HepG2 (cell line): ENCODE measurements at regions of chr10 and their contacts with region 1.

Region 1: GRCh38 chr10:114684085-114684821 is 26.2 kb upstream of the ABLIM1 start:
- DNase-seq: peak; percentile 50
- ATAC-seq: peak; percentile 78
- H3K4me3 ChIP-seq: peak overlapping the region; percentile 28 to 67 (median 57)
- H3K27ac ChIP-seq: peak overlapping the region; percentile 69
- H3K4me1 ChIP-seq: peaks cover 42% of the 10 kb centered on the region
- H3K27me3 ChIP-seq: no peaks in the 10 kb centered on the region
- CTCF ChIP-seq: no peak
- EP300 ChIP-seq: no peak
- POLR2A ChIP-seq: no peak
- RAD21 ChIP-seq: no peak

Region 2: GRCh38 chr10:114631666-114632417 is 52.4 kb before region 1 on chr10:
- CTCF ChIA-PET with region 1: no interaction called
- POLR2A ChIA-PET with region 1: interaction called, 9 read pairs
- in situ Hi-C with region 1: loop called (anchors 5 kb)
- intact Hi-C with region 1: no loop called
- DNase-seq: peak; percentile 76
- ATAC-seq: peak; percentile 95
- H3K4me3 ChIP-seq: peak overlapping the region; percentile 62 to 71 (median 64)
- H3K27ac ChIP-seq: peak overlapping the region; percentile 10
- H3K4me1 ChIP-seq: peaks cover 50% of the 10 kb centered on the region
- H3K27me3 ChIP-seq: peaks cover 0 to 15% of the 10 kb centered on the region in 2 experiments; a peak in 2 of 5 replicates
- CTCF ChIP-seq: peak; percentile 18; the same call in 1 of the 2 replicates
- EP300 ChIP-seq: no peak
- POLR2A ChIP-seq: no peak
- RAD21 ChIP-seq: no peak

Region 3: GRCh38 chr10:114726820-114727271 is 42.6 kb after region 1 on chr10:
- CTCF ChIA-PET with region 1: no interaction called
- POLR2A ChIA-PET with region 1: no interaction called
- in situ Hi-C with region 1: no loop called
- intact Hi-C with region 1: no loop called
- DNase-seq: no peak
- ATAC-seq: no peak
- H3K4me3 ChIP-seq: no peak overlapping the region
- H3K27ac ChIP-seq: no peak overlapping the region
- H3K4me1 ChIP-seq: peaks cover 9% of the 10 kb centered on the region
- H3K27me3 ChIP-seq: no peaks in the 10 kb centered on the region
- CTCF ChIP-seq: no peak
- EP300 ChIP-seq: no peak
- POLR2A ChIP-seq: no peak
- RAD21 ChIP-seq: no peak